IMR-90 (cell line): ENCODE measurements at regions of chr7 and their contacts with region 1.

Region 1: GRCh38 chr7:80722616-80723141 is 84.2 kb downstream of the CD36 start:
- DNase-seq: peak; percentile 100
- ATAC-seq: peak; percentile 89
- H3K4me3 ChIP-seq: no peak overlapping the region
- H3K27ac ChIP-seq: peak overlapping the region; percentile 95
- H3K4me1 ChIP-seq: peaks cover 12% of the 10 kb centered on the region
- H3K27me3 ChIP-seq: no peaks in the 10 kb centered on the region
- CTCF ChIP-seq: no peak
- POLR2A ChIP-seq: no peak
- RAD21 ChIP-seq: peak; percentile 20; the same call in 1 of the 2 replicates

Region 2: GRCh38 chr7:80711531-80711930 is 11.1 kb before region 1 on chr7:
- CTCF ChIA-PET with region 1: interaction called, 5 read pairs
- POLR2A ChIA-PET with region 1: no interaction called
- dilution Hi-C with region 1: no loop called
- in situ Hi-C with region 1: no loop called
- intact Hi-C with region 1: loop called (anchors 1 kb)
- DNase-seq: peak; percentile 73
- ATAC-seq: no peak; the same call in 1 of the 2 replicates
- H3K4me3 ChIP-seq: no peak overlapping the region
- H3K27ac ChIP-seq: no peak overlapping the region
- H3K4me1 ChIP-seq: no peaks in the 10 kb centered on the region; the same call in 1 of the 2 replicates
- H3K27me3 ChIP-seq: no peaks in the 10 kb centered on the region
- CTCF ChIP-seq: no peak
- POLR2A ChIP-seq: no peak
- RAD21 ChIP-seq: no peak

Region 3: GRCh38 chr7:80748363-80749042 is 25.8 kb after region 1 on chr7:
- CTCF ChIA-PET with region 1: no interaction called
- POLR2A ChIA-PET with region 1: interaction called, 13 read pairs
- dilution Hi-C with region 1: no loop called
- in situ Hi-C with region 1: no loop called
- intact Hi-C with region 1: no loop called
- DNase-seq: no peak
- ATAC-seq: no peak
- H3K4me3 ChIP-seq: no peak overlapping the region
- H3K27ac ChIP-seq: no peak overlapping the region
- H3K4me1 ChIP-seq: no peaks in the 10 kb centered on the region
- H3K27me3 ChIP-seq: no peaks in the 10 kb centered on the region
- CTCF ChIP-seq: no peak
- POLR2A ChIP-seq: no peak
- RAD21 ChIP-seq: no peak